BJ (cell line): ENCODE measurements at regions of chr7 and their contacts with region 1.

Region 1: GRCh38 chr7:134316539-134317344 is at the start of gene SLC35B4:
- DNase-seq: peak; percentile 84
- H3K4me3 ChIP-seq: peak within 1 kb of the TSS; percentile 63
- H3K27me3 ChIP-seq: no peaks in the 10 kb centered on the region
- CTCF ChIP-seq: peak; percentile 43
- polyA plus RNA-seq, gene SLC35B4: 25.1 and 27.3 TPM in 2 replicates

Region 2: GRCh38 chr7:133412942-133413341 is 903.8 kb before region 1 on chr7:
- CTCF ChIA-PET with region 1: no interaction called
- POLR2A ChIA-PET with region 1: no interaction called
- DNase-seq: no peak
- H3K4me3 ChIP-seq: no peak overlapping the region
- H3K27me3 ChIP-seq: no peaks in the 10 kb centered on the region
- CTCF ChIP-seq: no peak

Region 3: DNA sequence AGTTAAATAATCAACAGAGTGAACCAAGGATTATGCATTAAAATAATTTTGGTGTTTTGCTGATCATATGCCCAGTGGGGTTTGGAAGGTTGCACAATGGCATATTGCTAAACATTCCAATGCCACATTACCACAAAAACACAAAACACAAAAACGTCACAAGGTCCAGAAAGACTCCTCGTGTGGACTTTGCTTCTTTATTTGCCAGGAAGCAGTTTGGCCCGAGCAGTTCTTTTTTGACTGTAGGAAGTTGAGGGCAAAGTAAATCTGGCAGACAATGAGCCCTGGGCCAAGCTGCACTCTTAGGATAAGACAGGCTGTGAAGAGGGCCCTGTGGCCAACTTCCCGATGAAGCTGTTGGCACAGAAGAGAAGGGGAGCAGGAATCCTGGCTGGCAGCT is 39.2 kb after region 1 on chr7:
- CTCF ChIA-PET with region 1: interaction called, 13 read pairs
- POLR2A ChIA-PET with region 1: no interaction called
- DNase-seq: no peak
- H3K4me3 ChIP-seq: no peak overlapping the region
- H3K27me3 ChIP-seq: no peaks in the 10 kb centered on the region
- CTCF ChIP-seq: no peak

Region 4: GRCh38 chr7:134403677-134404076 is 86.9 kb after region 1 on chr7:
- CTCF ChIA-PET with region 1: no interaction called
- POLR2A ChIA-PET with region 1: no interaction called
- DNase-seq: no peak
- H3K4me3 ChIP-seq: no peak overlapping the region
- H3K27me3 ChIP-seq: peaks cover 6% of the 10 kb centered on the region; the same call in 1 of the 2 replicates
- CTCF ChIP-seq: no peak